ENCODE measurements at regions of chr6 and their contacts with region 1.

Region 1: DNA sequence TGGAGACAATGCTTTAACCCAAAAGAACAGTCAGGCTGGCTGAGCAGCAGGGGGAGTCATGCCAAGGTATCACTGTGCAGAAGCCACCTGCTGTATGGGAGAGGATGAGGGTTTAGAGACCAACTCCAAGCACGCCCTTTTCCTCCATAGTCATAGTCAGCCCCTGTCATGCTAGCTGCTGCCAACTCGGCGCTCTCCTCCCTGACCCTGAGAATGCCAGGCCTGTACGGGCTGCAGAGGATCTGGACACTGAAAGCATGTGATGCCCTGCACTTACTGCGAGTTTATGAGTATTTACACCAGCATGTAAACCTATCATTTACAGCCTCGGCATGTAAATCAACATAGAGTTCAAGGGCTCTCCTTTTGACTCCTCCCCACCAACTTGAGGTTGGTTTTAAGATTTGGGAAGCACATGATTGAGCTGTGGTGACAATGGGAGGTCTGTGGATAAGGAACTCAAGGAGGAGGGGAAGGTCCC is 11.7 kb upstream of the SCUBE3 start:
- DNase-seq: no peak
- ATAC-seq: peak; percentile 73

Region 2: DNA sequence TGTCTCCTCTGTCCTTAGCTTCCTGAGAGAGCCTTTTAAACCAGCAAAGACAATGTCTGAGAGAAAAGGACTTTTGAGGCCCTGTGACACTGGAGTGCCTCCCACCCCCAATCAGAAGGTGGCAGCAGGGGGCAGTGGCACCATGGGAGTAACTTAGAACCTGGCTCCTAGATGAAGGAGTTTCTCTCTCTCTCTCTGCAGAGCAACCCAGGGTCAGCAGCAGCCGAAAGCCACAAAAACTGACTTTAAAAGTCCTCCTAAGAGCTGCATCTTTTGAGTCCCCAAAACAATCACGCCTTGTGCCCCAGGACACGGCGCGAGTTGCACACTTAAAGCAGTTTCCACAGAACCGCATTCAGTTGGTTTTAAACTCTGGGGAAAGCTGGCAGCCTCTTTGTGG is 55.7 kb before region 1 on chr6:
- intact Hi-C with region 1: loop called (anchors 1 kb)
- DNase-seq: no peak
- ATAC-seq: peak; percentile 86

Region 3: DNA sequence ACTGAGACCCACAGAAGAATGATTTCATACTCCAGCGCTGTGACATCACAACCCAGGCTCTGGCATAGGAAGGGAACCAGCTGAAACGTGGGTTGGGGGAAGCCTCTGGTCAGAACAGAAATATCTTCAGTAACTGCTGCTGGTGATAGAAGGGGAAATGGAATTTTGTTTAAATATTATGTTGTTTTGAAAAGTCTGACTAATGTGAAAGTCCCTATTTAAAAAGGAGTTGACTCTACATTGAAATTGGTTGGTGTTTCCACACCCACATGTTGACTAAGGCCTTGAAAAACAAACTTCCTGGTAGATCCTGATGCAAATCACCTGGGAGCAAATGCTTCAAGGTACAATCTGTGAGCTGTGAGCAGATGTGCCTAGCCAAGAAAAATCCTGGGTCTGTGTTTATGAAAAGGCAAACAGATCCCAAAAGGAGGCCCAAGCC is 36.5 kb before region 1 on chr6:
- intact Hi-C with region 1: loop called (anchors 5 kb)
- DNase-seq: no peak
- ATAC-seq: no peak

Region 4: GRCh38 chr6:35468181-35468979 is 266.3 kb after region 1 on chr6 and contains the start of gene RPL10A:
- intact Hi-C with region 1: no loop called
- DNase-seq: peak; percentile 93
- ATAC-seq: peak; percentile 89
- total RNA-seq, gene RPL10A: 606 TPM

Measured in Right ventricle myocardium inferior (tissue), 1 donor.